ENCODE measurements at regions of chr16 and their contacts with region 1.

Region 1: DNA sequence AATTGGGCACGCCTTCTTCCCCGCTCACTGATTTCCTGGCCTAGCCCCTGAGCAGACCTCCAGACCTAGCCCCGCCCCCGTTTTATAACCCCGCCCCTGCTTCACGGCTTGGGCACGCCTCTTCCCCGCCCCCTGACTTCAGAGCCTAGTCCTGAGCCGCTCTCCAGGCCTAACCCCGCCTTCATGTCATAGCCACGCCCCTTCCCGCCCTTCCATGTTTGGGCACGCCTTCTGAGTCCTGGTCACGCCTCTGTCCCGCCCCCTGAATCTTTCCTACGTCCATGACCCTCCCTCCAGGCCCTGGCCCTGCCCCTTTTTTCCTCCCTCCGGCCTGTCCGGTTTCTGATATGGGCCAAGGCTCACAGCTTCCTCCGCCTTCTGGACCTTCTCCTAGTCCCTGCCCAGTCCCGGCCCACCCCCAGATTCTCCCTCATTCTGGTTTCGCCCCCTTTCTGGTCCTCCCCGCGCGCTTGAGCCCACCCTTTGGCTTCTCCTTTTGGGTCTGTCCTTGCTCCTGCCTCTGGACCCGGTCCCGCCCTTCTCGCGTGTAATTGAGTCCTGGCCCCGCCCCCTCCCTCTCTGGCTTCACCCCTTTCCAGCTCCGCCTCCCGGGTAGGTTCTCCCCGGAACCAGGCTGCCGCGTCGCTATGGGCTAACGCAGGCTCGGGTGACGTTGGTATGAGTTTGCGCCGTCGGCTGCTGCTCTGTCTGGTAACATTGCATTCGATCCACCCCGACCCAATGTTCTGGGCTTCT is 15.1 kb upstream of the EEF2K start:
- DNase-seq: peak; percentile 100
- ATAC-seq: peak; percentile 81

Region 2: DNA sequence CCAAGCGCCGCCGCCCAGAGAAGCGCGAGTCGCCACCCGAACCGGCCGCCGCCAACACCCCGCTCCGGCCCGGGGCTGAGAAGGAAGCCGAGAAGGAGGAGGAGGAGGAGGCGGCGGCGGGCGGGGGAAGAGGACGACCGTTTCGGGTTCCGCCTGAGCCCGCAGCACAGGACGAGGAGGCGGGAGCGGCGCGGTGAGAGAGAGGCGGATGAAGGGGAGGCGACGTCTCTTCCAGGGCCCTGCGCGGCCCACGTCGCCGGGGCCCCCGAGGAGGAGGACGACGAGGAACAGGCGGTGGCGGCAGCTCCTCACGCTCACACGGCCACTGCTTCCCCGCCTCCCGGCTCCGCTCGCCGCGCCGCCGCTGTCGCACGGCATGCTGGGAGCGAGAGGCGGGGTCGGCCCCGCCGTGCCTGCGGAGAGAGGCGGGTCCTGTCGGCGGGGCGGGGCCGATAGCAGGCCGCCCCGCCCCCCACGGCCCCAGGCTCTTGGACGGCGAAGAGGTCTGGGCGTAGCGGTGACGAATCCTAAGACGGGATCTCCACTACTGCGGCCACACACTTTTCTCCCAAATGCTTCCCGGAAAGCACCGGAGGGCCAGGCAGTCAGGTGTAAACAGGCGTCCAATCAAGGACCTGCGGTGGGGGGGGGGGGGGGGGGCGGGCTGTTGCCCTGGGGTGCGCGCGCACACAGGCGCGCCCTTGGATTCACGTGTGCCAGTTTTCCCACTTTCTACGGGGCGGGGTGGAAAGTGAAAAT is 688.9 kb before region 1 on chr16:
- intact Hi-C with region 1: loop called (anchors 10 kb)
- DNase-seq: peak; percentile 99
- ATAC-seq: peak; percentile 98

Region 3: GRCh38 chr16:21952793-21953540 is 238.0 kb before region 1 on chr16 and contains the start of gene UQCRC2:
- intact Hi-C with region 1: loop called (anchors 2 kb)
- DNase-seq: peak; percentile 93
- ATAC-seq: peak; percentile 97
- total RNA-seq, gene UQCRC2: 906 TPM

Region 4: DNA sequence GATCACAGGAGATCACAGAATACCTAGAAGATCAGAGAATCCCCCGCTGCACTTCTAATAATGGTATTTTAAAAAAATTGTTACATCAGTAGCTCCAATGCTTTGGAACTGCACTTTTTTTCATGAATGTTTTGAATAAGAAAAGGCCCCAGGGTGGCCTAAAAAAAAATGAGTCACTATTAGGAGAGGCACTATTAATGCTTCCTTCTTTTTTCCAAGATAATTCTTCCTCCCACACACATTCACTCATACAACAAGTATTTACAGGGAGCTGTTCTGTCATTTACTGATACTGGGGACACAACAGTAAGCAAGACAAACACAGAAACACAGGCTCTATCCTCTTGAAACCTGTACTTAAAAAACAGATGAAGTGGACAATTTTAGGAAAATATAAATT is 189.4 kb before region 1 on chr16:
- intact Hi-C with region 1: loop called (anchors 2 kb)
- DNase-seq: no peak
- ATAC-seq: no peak

Region 5: DNA sequence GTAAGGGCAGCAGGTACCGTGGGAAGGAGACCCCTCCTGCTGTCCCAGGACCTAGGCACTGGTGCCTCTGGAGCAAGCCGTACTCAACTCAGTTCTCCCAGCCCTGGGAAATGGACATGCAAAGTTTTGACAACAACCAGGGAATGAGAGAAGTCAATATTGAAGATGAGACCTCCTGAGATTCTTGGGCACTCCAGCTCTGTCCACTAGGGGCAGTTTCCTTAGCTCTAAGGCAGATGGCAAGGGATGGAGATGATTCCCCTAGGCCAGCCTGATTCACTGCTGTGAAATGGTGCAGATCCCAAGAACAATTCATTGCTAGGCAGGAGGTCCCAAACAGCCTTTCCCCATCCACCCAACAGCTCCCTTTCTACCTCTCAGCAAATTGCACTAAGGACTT is 49.2 kb before region 1 on chr16:
- intact Hi-C with region 1: no loop called
- DNase-seq: no peak
- ATAC-seq: no peak

Region 6: DNA sequence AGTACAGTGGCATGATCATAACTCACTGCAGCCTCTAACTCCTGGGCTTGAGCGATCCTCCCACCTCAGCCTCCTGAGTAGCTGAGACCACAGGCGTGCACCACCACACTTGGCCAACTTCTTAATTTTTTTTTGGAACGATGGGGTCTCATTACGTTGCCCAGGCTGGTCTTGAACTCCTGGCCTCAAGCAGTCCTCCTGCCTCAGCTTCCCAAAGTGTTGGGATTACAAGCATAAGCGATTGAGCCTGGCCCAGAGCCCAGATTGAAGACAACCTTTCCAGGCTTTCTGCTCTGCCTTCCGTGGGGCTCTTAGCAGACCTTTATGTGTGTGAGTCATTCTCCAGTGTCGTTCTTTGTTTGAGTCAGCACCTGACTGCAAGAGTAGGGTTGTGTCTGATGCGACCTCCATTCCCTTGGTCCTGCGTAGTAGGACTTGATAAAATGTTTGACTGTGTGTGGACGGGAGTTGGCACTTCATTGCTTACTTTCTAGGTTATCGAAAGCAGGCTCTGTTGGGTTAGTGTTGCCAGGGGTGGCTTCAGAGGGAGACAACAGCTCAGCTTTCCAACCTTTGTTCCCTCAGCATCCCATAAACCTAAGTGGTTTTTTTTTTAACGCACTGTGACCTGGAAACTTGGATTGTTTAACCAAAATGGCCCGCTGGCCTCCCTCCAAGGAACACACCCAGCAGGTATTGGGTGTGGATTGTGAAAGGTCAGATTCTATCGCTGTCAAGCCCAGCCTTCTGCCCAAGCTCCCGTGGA is 41.5 kb after region 1 on chr16:
- intact Hi-C with region 1: no loop called
- DNase-seq: no peak
- ATAC-seq: peak; percentile 45

Region 7: DNA sequence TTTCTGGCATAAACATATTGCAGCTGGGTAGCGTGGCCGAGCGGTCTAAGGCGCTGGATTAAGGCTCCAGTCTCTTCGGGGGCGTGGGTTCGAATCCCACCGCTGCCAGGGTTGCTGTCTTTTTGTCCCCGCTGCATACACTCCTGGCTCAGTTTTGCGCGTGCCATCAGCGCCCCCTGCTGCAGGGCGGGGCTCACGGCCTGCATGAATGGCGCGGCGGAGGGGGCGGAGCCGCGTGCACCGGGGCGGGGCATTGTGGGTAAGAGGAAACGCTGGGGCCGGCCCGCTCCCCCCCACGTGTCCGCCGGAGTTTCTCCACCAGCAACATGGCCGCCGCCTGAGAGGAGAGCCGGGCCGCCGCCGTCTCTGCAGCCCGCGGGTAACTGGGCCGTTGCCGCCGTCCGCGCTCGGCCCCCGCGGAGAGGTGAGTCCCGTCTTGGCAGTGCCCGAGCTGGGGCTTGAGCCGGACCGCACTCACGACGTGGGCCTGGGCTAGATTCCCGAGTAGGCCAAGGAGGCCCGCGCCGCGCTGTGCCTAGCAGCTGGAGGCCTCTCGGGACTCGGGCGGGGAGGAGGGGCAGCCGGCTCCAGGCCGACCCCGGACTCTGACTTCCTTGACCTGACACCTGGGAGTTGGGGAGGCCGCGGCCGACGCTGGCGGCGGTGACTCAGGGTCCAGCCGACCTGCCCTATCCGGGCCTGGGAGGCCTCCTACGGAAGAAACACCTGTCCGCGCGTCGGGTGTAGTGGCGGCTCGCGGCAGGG is 106.3 kb after region 1 on chr16 and contains the start of gene POLR3E:
- intact Hi-C with region 1: loop called (anchors 1 kb)
- DNase-seq: peak; percentile 100
- ATAC-seq: peak; percentile 97
- total RNA-seq, gene POLR3E: 36.4 TPM

Region 8: GRCh38 chr16:22374311-22375116 is 183.6 kb after region 1 on chr16 and contains the start of gene CDR2:
- intact Hi-C with region 1: loop called (anchors 1 kb)
- DNase-seq: peak; percentile 98
- ATAC-seq: peak; percentile 98
- total RNA-seq, gene CDR2: 6.7 TPM

Measured in Right ventricle myocardium inferior (tissue), 1 donor.